ENCODE measurements at regions of chr20 and their contacts with region 1.

Region 1: GRCh38 chr20:21719592-21720214 is 14.2 kb downstream of the PAX1 start:
- DNase-seq: peak; percentile 58
- ATAC-seq: no peak
- H3K4me3 Mint-ChIP-seq: no peak overlapping the region
- H3K27ac Mint-ChIP-seq: no peak overlapping the region
- H3K4me1 Mint-ChIP-seq: no peaks in the 10 kb centered on the region
- H3K27me3 Mint-ChIP-seq: peaks cover 25% of the 10 kb centered on the region

Region 2: DNA sequence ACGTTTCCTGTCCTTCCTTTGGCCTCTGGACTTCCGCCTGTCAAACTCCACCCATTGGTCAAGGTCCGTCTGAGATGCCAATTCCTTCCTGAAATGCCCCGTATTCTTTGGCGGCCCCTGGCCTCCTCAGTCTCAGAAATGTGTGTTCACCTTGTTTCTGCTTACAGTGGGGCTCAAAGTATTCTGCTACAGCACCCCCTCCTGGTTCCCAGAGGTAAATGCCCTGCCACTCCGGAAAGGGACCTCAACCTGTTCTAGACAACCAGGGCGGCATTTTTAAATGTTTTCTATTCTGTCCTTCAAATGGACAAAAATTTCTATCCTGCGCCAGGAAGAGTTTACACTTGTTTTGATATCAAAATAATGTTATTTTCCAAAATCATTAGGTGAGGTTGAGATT is 26.4 kb before region 1 on chr20:
- CTCF ChIA-PET with region 1: interaction called, 11 read pairs
- POLR2A ChIA-PET with region 1: no interaction called
- DNase-seq: no peak
- ATAC-seq: no peak
- H3K4me3 Mint-ChIP-seq: no peak overlapping the region
- H3K27ac Mint-ChIP-seq: no peak overlapping the region
- H3K4me1 Mint-ChIP-seq: no peaks in the 10 kb centered on the region
- H3K27me3 Mint-ChIP-seq: peaks cover 9% of the 10 kb centered on the region

Region 3: DNA sequence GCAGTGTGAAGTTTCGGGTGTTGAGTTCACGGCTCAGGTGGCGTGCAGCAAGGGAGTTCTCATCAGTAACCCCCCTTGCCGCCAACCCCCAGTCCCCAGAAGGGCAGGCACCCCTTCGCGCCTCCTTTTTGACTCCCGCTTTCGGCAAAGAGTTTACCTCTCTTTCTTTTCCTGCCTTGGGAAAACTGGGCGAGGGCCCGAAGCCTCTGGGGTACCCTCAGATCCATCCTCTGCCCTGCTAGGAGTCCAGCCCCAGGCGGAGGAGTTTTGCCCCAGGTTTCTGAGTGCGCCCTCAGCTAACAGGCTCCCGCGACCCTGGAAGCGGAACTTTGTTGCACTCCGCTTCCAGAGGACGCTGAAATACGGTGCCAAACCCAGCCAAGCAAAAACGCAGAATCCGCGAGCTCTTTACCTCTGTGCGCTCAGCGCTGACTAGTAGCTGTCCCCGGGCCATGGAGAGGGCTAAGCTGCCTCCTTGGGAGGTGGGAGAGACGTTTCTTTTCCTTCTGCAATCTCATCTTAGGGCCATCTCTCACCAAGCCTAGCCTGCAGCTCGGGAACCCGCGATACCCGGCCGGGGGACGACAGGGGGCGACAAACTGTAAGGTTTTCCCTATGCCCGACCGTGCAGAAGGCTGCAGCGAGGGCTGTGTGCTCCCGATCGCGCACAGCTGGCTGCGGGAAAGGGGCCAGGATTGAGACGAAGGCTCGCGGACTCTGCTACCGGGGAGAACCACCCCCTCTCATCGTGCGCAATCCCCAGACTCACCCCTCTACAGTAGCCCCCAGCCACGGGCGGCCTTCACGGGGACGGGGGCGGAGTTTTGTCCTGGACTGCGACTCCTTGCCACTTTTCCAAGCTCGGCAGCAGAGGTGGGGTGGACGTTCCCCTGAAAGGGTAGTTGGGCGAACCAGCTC is 16.9 kb before region 1 on chr20:
- CTCF ChIA-PET with region 1: interaction called, 11 read pairs
- POLR2A ChIA-PET with region 1: no interaction called
- DNase-seq: peak; percentile 42
- ATAC-seq: no peak
- H3K4me3 Mint-ChIP-seq: no peak overlapping the region
- H3K27ac Mint-ChIP-seq: no peak overlapping the region
- H3K4me1 Mint-ChIP-seq: no peaks in the 10 kb centered on the region
- H3K27me3 Mint-ChIP-seq: peaks cover 87% of the 10 kb centered on the region

Region 4: GRCh38 chr20:21867353-21867752 is 147.7 kb after region 1 on chr20:
- CTCF ChIA-PET with region 1: no interaction called
- POLR2A ChIA-PET with region 1: no interaction called
- DNase-seq: no peak
- ATAC-seq: no peak
- H3K4me3 Mint-ChIP-seq: no peak overlapping the region
- H3K27ac Mint-ChIP-seq: no peak overlapping the region
- H3K4me1 Mint-ChIP-seq: no peaks in the 10 kb centered on the region
- H3K27me3 Mint-ChIP-seq: no peaks in the 10 kb centered on the region